CD4-positive, alpha-beta memory T cell (primary cell): ENCODE measurements at regions of chr9 and their contacts with region 1.

Region 1: GRCh38 chr9:33374634-33375213 is 27.6 kb downstream of the AQP7 start:
- DNase-seq: peak; percentile 61 to 71 (median 67)
- H3K4me3 ChIP-seq: no peak overlapping the region
- H3K4me3 Mint-ChIP-seq: peak overlapping the region in 1 of 8 donors; percentile 11
- H3K27ac ChIP-seq: no peak overlapping the region
- H3K27ac Mint-ChIP-seq: peak overlapping the region in 5 of 7 donors; percentile 38 to 74 (median 66)
- H3K4me1 ChIP-seq: peaks cover 3% of the 10 kb centered on the region
- H3K4me1 Mint-ChIP-seq: peaks cover 0 to 7% (median 5%) of the 10 kb centered on the region in 4 donors
- H3K27me3 ChIP-seq: no peaks in the 10 kb centered on the region
- H3K27me3 Mint-ChIP-seq: no peaks in the 10 kb centered on the region

Region 2: GRCh38 chr9:33415501-33416038 is 40.8 kb after region 1 on chr9:
- CTCF ChIA-PET with region 1: interaction called, 37 read pairs
- POLR2A ChIA-PET with region 1: interaction called, 13 read pairs
- intact Hi-C with region 1: loop called (anchors 1 kb)
- DNase-seq: peak; percentile 97 to 98 (median 97)
- H3K4me3 ChIP-seq: peak overlapping the region; percentile 31 to 50
- H3K4me3 Mint-ChIP-seq: peak overlapping the region; percentile 71 to 92 (median 86)
- H3K27ac ChIP-seq: peak overlapping the region; percentile 65
- H3K27ac Mint-ChIP-seq: peak overlapping the region; percentile 92 to 99 (median 98)
- H3K4me1 ChIP-seq: peaks cover 54% of the 10 kb centered on the region
- H3K4me1 Mint-ChIP-seq: peaks cover 38 to 65% (median 57%) of the 10 kb centered on the region in 4 donors
- H3K27me3 ChIP-seq: no peaks in the 10 kb centered on the region
- H3K27me3 Mint-ChIP-seq: no peaks in the 10 kb centered on the region

Region 3: GRCh38 chr9:33452828-33453271 is 78.1 kb after region 1 on chr9:
- CTCF ChIA-PET with region 1: interaction called, 47 read pairs
- POLR2A ChIA-PET with region 1: interaction called, 4 read pairs
- intact Hi-C with region 1: no loop called
- DNase-seq: peak; percentile 24 to 50 (median 40)
- H3K4me3 ChIP-seq: no peak overlapping the region
- H3K4me3 Mint-ChIP-seq: peak overlapping the region in 7 of 8 donors; percentile 3 to 65 (median 32)
- H3K27ac ChIP-seq: peak overlapping the region; percentile 36
- H3K27ac Mint-ChIP-seq: peak overlapping the region; percentile 55 to 87 (median 83)
- H3K4me1 ChIP-seq: peaks cover 69% of the 10 kb centered on the region
- H3K4me1 Mint-ChIP-seq: peaks cover 43 to 70% (median 57%) of the 10 kb centered on the region in 4 donors
- H3K27me3 ChIP-seq: no peaks in the 10 kb centered on the region
- H3K27me3 Mint-ChIP-seq: no peaks in the 10 kb centered on the region

Region 4: GRCh38 chr9:33473643-33474352 is 99.1 kb after region 1 on chr9 and contains the start of gene NOL6:
- CTCF ChIA-PET with region 1: interaction called, 120 read pairs
- POLR2A ChIA-PET with region 1: interaction called, 6 read pairs
- intact Hi-C with region 1: no loop called
- DNase-seq: peak; percentile 98 to 99 (median 98)
- H3K4me3 ChIP-seq: peak within 1 kb of the TSS; percentile 80 to 93
- H3K4me3 Mint-ChIP-seq: peak within 1 kb of the TSS; percentile 95 to 100 (median 99)
- H3K27ac ChIP-seq: peak within 1 kb of the TSS; percentile 62
- H3K27ac Mint-ChIP-seq: peak within 1 kb of the TSS; percentile 90 to 100 (median 97)
- H3K4me1 ChIP-seq: peaks cover 27% of the 10 kb centered on the region
- H3K4me1 Mint-ChIP-seq: peaks cover 11 to 36% (median 28%) of the 10 kb centered on the region in 4 donors
- H3K27me3 ChIP-seq: no peaks in the 10 kb centered on the region
- H3K27me3 Mint-ChIP-seq: no peaks in the 10 kb centered on the region
- total RNA-seq, gene NOL6: 39.1 to 41.1 TPM

Region 5: GRCh38 chr9:33517373-33517772 is 142.6 kb after region 1 on chr9:
- CTCF ChIA-PET with region 1: interaction called, 18 read pairs
- POLR2A ChIA-PET with region 1: no interaction called
- intact Hi-C with region 1: loop called (anchors 1 kb)
- DNase-seq: peak in 1 of 5 donors; percentile 20
- H3K4me3 ChIP-seq: no peak overlapping the region
- H3K4me3 Mint-ChIP-seq: no peak overlapping the region
- H3K27ac ChIP-seq: no peak overlapping the region
- H3K27ac Mint-ChIP-seq: no peak overlapping the region
- H3K4me1 ChIP-seq: no peaks in the 10 kb centered on the region
- H3K4me1 Mint-ChIP-seq: no peaks in the 10 kb centered on the region
- H3K27me3 ChIP-seq: no peaks in the 10 kb centered on the region
- H3K27me3 Mint-ChIP-seq: peaks cover 7 to 9% of the 10 kb centered on the region in 2 donors